Left cardiac atrium (tissue), 4 donors: ENCODE measurements at regions of chr14 and their contacts with region 1.

Region 1: DNA sequence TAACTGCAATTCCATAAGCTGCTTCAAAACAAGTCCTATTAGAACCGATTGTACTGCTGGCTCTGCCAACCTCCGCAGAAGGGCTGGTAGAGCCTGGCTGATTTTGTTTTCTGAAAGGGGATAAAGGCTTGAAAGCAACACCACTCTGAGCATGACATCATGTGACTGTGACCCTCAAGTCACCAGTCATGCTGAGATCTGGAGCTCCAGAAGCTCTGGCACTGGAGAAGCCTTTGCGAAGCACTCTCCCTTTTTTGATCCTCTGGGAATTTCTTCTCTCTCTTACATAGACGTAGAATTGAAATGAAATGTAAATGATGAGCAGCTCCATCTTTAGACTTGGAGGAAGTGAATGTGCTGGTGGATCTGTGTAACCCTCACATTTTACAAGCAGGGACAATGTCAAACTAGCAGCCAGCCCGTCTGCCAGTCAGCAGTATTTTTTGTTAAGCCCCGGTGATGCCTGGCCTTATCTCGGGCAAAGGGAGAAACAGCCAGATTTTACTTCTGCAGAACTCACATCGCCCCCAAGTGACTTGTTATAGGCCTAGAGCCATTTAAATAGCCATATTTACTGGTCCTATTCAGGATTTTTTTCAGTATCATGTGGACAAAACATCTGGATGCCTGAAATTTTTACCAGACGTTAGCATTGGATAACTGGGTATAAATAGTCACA is 112.1 kb upstream of the NPAS3 start:
- DNase-seq: no peak
- ATAC-seq: peak; percentile 63 to 85

Region 2: GRCh38 chr14:32608857-32609256 is 217.7 kb before region 1 on chr14:
- intact Hi-C with region 1: loop called in 1 of 2 experiments (anchors 10 kb)
- DNase-seq: no peak
- ATAC-seq: peak in 1 of 2 donors; percentile 83